Activated CD8-positive, alpha-beta T cell treated with anti-CD3 and anti-CD28 coated beads for 36 hours (primary cell): ENCODE measurements at regions of chr9 and their contacts with region 1.

Region 1: DNA sequence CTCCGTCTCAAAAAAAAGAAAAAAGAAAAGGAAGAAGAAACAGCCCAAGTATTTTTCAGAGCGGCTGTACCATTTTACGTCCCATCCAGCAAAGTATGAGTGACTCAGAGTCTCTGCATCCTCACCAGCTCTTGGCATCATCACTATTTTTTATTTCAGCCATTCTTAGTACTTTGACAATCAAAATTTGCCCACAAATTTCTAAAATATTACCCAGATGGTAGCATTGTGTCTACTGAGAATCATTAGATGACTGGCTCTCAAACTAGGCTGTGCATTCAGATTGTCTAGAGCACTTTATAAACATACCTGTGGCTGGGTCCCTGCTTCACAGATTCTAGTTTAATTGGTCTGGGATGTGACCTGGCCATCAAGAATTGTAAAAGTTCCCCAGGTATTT is 21.6 kb upstream of the MELK start:
- DNase-seq: no peak
- ATAC-seq: no peak
- H3K4me3 Mint-ChIP-seq: no peak overlapping the region
- H3K27ac Mint-ChIP-seq: no peak overlapping the region
- H3K4me1 Mint-ChIP-seq: peaks cover 1% of the 10 kb centered on the region
- H3K27me3 Mint-ChIP-seq: no peaks in the 10 kb centered on the region
- CTCF ChIP-seq: no peak

Region 2: DNA sequence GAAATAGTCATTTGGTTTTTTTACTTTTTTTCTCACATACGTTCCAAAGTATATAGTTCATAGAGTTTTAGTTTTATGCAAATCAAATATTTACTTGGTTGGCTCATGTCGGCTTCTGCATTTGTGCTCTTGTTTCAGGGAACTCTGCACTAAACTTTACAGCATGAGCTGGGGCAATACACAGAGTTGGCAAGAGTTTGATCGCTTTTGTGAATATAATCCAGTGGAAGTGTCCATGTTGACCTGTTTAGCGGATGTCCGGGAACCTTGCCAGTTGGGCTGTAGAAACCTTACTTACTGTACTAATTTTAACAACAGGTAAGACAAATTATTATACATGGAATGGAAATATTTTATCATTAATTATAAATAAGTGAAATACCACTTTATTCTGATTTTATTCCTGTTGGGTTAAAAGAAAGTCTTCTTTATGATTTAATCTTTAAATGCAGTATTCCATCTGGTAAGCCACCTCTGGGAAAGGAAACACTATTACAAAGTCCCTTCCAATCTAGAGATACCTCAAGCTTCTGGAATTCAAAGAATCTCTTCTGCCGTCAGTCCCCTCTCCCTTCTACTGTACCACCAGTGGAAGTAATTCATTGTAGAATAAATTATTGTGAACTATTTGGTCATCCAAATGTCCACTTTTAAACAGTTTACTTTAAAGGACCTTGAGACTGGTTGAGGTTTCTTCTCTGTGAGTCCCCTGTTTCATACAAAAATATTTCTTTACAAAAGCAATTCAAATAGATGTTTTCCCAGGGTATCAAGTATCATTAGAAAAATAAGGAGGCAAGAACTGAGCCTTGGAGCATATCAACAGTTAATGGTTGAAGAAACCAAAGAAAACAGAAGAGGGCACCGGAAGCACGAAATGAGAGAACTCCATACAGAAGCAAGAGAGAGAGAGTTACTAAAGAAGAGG is 459.8 kb before region 1 on chr9:
- CTCF ChIA-PET with region 1: no interaction called
- POLR2A ChIA-PET with region 1: no interaction called
- intact Hi-C with region 1: no loop called
- DNase-seq: no peak
- ATAC-seq: no peak
- H3K4me3 Mint-ChIP-seq: no peak overlapping the region
- H3K27ac Mint-ChIP-seq: peak overlapping the region; percentile 11
- H3K4me1 Mint-ChIP-seq: peaks cover 19% of the 10 kb centered on the region
- H3K27me3 Mint-ChIP-seq: no peaks in the 10 kb centered on the region
- CTCF ChIP-seq: no peak

Region 3: DNA sequence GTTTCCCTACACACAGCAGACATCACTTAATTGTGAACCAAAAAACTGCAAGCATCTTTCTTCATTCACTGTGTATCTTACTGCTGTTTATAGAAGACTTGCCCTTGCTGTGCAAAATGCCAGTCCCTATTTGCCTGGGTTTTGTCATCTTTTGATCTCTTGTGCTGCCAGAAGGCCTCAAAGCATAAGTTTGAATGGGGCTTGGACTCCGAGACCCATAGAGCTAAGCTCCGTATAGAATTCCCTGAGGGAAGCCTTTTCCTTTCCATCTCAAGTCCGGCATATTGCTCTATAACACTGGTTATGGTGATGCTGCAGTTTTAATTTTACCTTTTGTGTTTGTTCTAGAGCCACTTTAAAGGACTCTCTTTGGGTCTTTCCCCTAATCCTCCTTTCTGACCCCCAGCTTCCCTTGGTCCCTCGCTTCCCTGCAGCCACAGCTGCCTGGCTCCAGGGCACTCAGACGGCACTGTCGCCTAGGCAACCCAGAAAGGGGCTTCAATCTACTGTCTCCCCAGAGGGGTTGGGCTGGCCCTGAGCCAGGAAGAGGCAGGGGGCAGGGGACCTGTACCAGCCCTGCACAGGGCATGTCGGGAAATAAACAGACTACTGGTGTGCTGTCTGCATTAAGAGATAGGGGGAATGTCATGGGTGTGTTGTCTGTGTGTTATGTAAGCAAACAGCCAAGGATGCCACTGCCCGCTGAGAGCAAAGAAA is 51.8 kb before region 1 on chr9:
- CTCF ChIA-PET with region 1: interaction called, 6 read pairs
- POLR2A ChIA-PET with region 1: no interaction called
- intact Hi-C with region 1: loop called (anchors 10 kb)
- DNase-seq: no peak
- ATAC-seq: no peak
- H3K4me3 Mint-ChIP-seq: no peak overlapping the region
- H3K27ac Mint-ChIP-seq: no peak overlapping the region
- H3K4me1 Mint-ChIP-seq: peaks cover 29% of the 10 kb centered on the region
- H3K27me3 Mint-ChIP-seq: no peaks in the 10 kb centered on the region
- CTCF ChIP-seq: no peak